Heart left ventricle (tissue), 16 donors: ENCODE measurements at regions of chr16 and their contacts with region 1.

Region 1: DNA sequence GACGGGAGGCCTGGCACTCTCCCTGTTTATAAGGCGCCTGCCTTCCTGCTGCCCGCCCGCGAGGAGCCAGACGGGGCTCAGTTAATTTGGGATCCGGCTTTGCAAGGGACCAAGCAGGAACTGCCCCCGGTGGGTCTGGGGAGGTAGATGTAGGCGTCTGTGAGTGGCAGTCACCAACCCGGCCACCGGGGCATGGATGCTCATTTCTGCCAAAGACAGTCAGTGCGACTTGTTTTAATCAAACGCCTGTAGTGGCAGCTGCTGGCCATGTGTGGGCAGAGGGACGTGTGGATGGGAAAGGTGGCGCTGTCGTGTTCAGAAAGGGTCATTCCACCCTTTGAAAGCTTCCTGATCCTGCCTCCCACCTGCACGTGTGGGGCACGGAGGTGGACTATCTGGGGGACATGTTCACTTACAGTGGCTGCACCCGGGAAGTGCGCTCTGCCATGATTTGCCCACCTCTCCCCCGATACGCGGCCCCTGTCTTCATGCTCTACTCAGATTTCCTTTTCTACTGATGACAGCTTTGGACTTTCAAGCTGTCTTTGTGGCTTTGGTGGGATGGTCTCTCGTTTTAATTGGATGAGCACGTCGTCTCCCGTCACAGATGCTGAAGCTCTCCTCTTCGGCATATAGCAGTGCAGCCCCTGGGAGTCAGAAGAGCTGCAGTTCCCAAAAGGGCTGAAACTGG is 60.3 kb upstream of the CIBAR2 start:
- DNase-seq: peak in 3 of 5 donors; percentile 59 to 69 (median 67)
- ATAC-seq: peak; percentile 23 to 58 (median 44)
- H3K4me3 ChIP-seq: peak overlapping the region in 11 of 12 donors; percentile 12 to 47 (median 35)
- H3K27ac ChIP-seq: peak overlapping the region in 7 of 12 donors; percentile 1 to 49 (median 27)
- H3K4me1 ChIP-seq: peaks cover 0 to 87% (median 63%) of the 10 kb centered on the region in 12 donors
- H3K27me3 ChIP-seq: peaks cover 0 to 44% (median 0%) of the 10 kb centered on the region in 9 donors
- CTCF ChIP-seq: peak in 11 of 12 donors; percentile 26 to 62 (median 44)
- POLR2A ChIP-seq: no peak

Region 2: DNA sequence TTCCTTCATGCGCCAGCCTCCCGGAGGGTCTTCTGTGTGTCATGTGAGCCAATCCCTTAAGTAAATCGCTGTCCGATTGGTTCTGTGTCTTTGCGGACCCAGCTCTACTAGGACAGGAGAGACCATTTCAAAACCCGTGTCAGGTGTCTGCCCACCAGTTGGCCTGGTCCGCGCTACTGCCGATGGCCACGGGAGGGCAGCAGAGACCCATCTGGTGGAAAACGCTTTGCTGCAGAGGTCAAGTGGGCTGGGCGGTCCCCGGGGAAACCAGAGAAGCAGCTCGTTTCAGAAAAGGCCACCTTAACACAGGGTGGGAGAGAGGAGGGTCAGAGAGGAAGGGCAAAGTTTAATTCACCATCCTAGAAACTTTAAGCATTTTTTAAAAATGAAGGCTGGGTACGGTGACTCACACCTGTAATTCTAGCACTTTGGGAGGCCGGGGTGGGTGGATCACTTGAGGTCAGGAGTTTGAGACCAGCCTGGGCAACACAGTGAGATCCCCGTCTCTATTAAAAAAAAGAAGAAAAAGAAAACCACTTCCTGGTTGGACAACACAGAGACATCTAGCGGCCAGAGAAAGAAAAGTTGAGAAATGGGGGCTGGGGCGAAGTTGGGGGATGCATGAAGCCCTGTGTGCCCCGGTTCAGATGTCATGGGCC is 57.6 kb before region 1 on chr16:
- intact Hi-C with region 1: loop called in 5 of 10 experiments (anchors 2 to 5 kb)
- DNase-seq: peak; percentile 86 to 94 (median 88)
- ATAC-seq: peak; percentile 70 to 91 (median 86)
- H3K4me3 ChIP-seq: peak overlapping the region in 4 of 12 donors; percentile 23 to 40 (median 29)
- H3K27ac ChIP-seq: peak overlapping the region in 7 of 12 donors; percentile 23 to 60 (median 49)
- H3K4me1 ChIP-seq: peaks cover 0 to 9% (median 1%) of the 10 kb centered on the region in 12 donors
- H3K27me3 ChIP-seq: no peaks in the 10 kb centered on the region
- CTCF ChIP-seq: peak; percentile 85 to 99 (median 96)
- POLR2A ChIP-seq: no peak

Region 3: GRCh38 chr16:85206472-85207356 is 34.1 kb after region 1 on chr16:
- intact Hi-C with region 1: loop called in 1 of 10 experiments (anchors 5 kb)
- DNase-seq: peak; percentile 74 to 88 (median 77)
- ATAC-seq: peak; percentile 51 to 75 (median 60)
- H3K4me3 ChIP-seq: peak overlapping the region in 2 of 12 donors; percentile 9 to 17
- H3K27ac ChIP-seq: peak overlapping the region in 10 of 12 donors; percentile 28 to 81 (median 71)
- H3K4me1 ChIP-seq: peaks cover 14 to 75% (median 47%) of the 10 kb centered on the region in 12 donors
- H3K27me3 ChIP-seq: no peaks in the 10 kb centered on the region
- CTCF ChIP-seq: no peak
- POLR2A ChIP-seq: no peak

Region 4: DNA sequence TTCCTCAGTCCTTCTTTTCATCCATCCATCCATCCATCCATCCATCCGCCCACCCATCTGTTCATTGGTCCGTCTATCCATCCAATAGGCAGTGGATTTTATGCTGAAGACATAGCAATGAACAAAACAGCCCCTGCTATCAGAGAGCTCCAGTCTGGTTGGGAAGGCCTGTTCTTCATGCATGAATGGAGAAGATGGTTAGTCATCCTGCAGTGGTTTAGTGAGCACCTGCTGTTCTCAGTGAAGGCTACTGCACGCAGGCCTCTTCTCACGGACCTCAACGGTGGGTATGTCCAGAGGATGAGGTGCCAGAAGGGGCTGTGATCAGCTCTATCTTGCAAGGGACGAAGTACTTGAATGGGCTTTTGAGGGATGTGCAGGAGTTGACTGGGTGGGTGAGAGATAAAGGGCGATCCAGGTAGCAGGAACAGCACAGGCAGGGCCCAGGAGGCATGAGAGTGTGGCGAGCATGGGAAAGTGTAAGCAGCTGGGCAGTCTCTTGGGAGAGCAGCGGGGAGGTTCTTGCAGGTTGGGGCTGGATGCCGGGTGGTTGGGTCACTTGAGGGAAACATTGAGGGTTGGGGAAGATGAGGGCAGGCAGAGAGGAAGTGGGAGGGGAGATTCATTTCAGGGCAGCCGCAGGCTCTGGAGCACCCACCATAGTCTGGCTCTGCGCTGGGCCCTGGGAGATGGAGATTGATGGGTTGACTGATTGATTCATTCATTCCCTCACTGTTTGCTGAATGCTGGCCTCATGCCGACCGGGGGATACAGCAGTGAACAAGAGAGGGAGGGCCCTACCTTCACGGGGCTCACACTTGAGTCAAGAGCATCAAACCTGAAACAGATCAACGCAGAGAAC is 54.7 kb after region 1 on chr16:
- intact Hi-C with region 1: loop called in 4 of 10 experiments (anchors 5 to 10 kb)
- DNase-seq: no peak
- ATAC-seq: no peak
- H3K4me3 ChIP-seq: no peak overlapping the region
- H3K27ac ChIP-seq: no peak overlapping the region
- H3K4me1 ChIP-seq: peaks cover 0 to 11% (median 9%) of the 10 kb centered on the region in 12 donors
- H3K27me3 ChIP-seq: no peaks in the 10 kb centered on the region
- CTCF ChIP-seq: no peak
- POLR2A ChIP-seq: no peak

Region 5: DNA sequence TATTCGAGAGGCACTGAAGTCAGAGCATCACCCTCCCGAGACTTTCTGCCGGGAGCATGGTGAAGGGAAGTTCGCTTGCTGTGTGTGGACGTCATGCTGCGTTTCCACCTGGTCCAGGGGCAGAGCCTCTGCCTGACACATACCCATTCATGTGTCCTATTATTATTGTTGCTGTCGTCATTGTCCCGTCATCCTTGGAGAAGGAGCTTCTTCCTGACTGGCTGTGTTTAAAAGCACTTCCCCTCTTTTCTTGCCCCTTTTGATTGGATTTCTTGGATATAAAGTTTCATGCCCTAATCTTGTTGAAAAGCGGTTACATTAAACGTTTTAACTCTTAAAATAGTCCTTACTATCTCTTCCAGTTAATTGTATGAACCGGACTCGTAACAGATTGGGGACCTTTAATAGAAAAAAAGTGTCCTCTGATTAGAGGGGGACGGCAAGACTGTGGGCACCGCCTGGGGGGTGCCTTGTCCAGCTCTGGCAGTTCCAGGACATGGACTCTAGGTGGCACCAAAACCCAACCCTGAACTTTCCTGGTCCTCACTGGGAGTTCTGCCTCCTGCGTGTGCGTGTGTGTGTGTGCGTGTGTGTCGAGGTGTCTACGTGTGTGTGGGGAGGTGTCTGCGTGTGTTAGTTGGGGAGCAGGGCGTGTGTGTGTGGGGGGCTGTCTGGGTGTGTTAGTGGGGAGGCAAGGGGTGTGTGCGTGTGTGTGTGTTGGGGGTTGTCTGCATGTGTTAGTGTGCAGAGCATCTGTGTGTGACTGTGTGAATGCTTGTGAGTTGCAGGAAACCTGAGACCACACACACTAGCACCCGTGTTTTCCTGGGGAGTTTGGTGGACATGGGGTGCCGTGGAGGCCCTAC is 72.9 kb after region 1 on chr16:
- intact Hi-C with region 1: loop called in 1 of 10 experiments (anchors 5 kb)
- DNase-seq: peak in 4 of 5 donors; percentile 59 to 74 (median 63)
- ATAC-seq: peak in 3 of 4 donors; percentile 51 to 65 (median 62)
- H3K4me3 ChIP-seq: no peak overlapping the region
- H3K27ac ChIP-seq: no peak overlapping the region
- H3K4me1 ChIP-seq: peaks cover 0 to 6% (median 0%) of the 10 kb centered on the region in 12 donors
- H3K27me3 ChIP-seq: peaks cover 0 to 3% (median 0%) of the 10 kb centered on the region in 9 donors
- CTCF ChIP-seq: peak; percentile 64 to 88 (median 78)
- POLR2A ChIP-seq: no peak

Region 6: GRCh38 chr16:85316321-85316919 is 143.8 kb after region 1 on chr16:
- intact Hi-C with region 1: no loop called
- DNase-seq: peak in 4 of 5 donors; percentile 51 to 67 (median 59)
- ATAC-seq: peak; percentile 73 to 80 (median 75)
- H3K4me3 ChIP-seq: no peak overlapping the region
- H3K27ac ChIP-seq: no peak overlapping the region
- H3K4me1 ChIP-seq: peaks cover 0 to 32% (median 18%) of the 10 kb centered on the region in 12 donors
- H3K27me3 ChIP-seq: no peaks in the 10 kb centered on the region
- CTCF ChIP-seq: peak; percentile 71 to 89 (median 79)
- POLR2A ChIP-seq: no peak